Activated B cell treated with CpG ODN at 0.5 μM for 24 hours (primary cell): ENCODE measurements at regions of chr2 and their contacts with region 1.

Region 1: DNA sequence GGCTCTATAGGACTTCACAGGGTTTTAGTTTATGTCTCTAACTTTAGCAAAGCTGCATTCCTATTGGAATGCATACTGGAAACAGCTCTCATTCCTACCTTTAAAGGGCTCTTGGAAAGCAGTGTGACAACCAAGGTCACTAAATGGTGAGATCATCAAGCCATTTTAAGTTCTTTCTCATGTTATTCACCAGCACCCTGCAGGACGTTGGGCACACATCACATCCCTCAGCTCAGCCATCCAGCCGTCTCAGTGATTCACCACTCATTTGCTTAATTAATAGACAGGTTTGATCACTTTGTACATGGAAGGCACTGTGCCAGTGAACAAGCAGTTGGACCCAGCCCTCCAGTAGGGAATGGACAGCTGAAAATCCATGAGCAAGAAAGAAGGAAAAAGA is 32.2 kb upstream of the RBM44 start:
- DNase-seq: no peak
- ATAC-seq: no peak
- H3K4me3 Mint-ChIP-seq: no peak overlapping the region
- H3K27ac Mint-ChIP-seq: no peak overlapping the region
- H3K4me1 Mint-ChIP-seq: no peaks in the 10 kb centered on the region
- H3K27me3 Mint-ChIP-seq: no peaks in the 10 kb centered on the region
- CTCF ChIP-seq: no peak

Region 2: DNA sequence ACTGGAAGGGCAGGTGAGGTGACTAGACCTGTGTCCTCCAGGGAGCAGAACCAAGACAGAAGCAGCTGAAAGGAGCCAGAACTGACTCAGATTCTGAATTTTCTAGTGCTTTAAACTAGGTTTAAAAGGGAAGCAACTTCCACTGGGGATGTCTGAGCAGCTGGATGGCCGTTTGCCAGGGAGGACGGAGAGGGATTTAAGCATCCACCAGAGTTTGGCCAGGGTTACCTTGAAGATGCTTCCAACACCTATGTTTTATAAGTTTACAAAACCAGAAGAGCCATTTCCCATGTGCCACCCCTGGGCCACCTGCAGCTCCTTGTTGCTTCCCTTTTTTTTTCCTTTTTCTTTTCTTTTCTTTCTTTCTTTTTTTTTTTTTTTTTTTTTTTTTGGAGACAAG is 16.4 kb before region 1 on chr2:
- CTCF ChIA-PET with region 1: interaction called, 3 read pairs
- POLR2A ChIA-PET with region 1: no interaction called
- intact Hi-C with region 1: loop called (anchors 2 kb)
- DNase-seq: no peak
- ATAC-seq: no peak
- H3K4me3 Mint-ChIP-seq: no peak overlapping the region
- H3K27ac Mint-ChIP-seq: no peak overlapping the region
- H3K4me1 Mint-ChIP-seq: peaks cover 14% of the 10 kb centered on the region
- H3K27me3 Mint-ChIP-seq: no peaks in the 10 kb centered on the region
- CTCF ChIP-seq: no peak

Region 3: DNA sequence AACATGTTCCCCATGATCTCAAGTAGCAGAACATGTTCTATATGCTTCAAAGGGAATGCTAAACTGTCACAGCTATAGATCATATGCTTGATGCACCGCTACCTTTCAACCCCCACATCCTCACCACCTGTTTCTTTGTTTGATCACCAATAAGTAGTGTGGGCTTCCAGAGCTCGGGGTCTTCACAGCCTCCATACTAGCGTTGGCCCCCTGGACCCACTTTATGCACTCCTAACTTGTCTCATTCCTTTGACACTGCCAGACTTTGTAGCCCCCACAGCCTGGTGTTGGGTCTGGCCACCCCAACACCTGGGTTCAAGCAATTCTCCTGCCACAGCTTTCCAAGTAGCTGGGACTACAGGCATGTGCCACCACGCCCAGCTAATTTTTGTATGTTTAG is 20.6 kb after region 1 on chr2:
- CTCF ChIA-PET with region 1: no interaction called
- POLR2A ChIA-PET with region 1: no interaction called
- intact Hi-C with region 1: loop called (anchors 1 kb)
- DNase-seq: no peak
- ATAC-seq: no peak
- H3K4me3 Mint-ChIP-seq: no peak overlapping the region
- H3K27ac Mint-ChIP-seq: no peak overlapping the region
- H3K4me1 Mint-ChIP-seq: no peaks in the 10 kb centered on the region
- H3K27me3 Mint-ChIP-seq: no peaks in the 10 kb centered on the region
- CTCF ChIP-seq: no peak